GM10248 (cell line): ENCODE measurements at regions of chr4 and their contacts with region 1.

Region 1: GRCh38 chr4:147837435-147837834 is 105.5 kb downstream of the ARHGAP10 start:
- DNase-seq: no peak
- CTCF ChIP-seq: no peak

Region 2: DNA sequence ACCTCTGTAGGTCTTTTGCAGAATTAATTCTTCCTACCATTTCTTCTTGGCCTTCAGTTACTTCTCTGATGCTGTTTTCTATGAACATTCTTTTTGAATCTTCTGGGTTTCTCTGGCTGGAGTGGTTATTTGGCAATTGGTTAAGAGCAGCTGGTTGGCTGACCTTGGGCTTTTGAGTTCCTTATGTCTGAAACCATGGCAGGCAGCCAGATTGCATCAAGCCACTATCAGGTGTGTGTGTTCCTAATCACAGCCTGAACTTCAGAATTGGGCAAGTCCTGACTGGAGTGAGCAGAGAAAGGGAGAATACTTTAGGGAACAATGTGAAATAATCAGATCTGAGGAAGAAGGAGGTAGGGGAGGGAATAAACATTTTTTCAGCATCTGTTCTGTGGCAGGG is 15.3 kb before region 1 on chr4:
- CTCF ChIA-PET with region 1: interaction called, 14 read pairs
- POLR2A ChIA-PET with region 1: no interaction called
- DNase-seq: no peak
- CTCF ChIP-seq: no peak

Region 3: DNA sequence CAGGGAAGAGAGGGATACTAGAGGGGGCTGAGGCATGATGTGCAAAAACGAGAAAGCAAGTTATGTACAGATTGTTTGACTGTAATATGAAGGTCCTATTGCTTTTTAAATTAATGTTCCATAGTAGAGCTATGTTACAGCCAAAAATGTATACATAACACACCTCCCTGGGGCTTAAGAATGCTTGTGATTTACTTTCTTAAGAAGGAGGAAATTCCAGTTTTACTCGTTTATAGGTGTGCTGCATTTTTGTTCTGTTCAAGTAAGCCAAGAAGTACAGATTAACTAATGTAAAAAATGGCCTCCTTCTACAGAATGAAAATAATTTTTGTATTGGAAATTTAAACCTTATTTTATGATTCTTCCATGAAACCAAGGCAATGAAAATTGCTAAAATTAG is 1219.2 kb after region 1 on chr4:
- CTCF ChIA-PET with region 1: no interaction called
- POLR2A ChIA-PET with region 1: no interaction called
- DNase-seq: no peak
- CTCF ChIP-seq: no peak